CD4-positive, alpha-beta memory T cell (primary cell): ENCODE measurements at regions of chr1 and their contacts with region 1.

Region 1: GRCh38 chr1:231211005-231211857 is 29.8 kb upstream of the GNPAT start:
- DNase-seq: peak; percentile 79 to 87 (median 82)
- H3K4me3 ChIP-seq: peak overlapping the region in 1 of 2 donors; percentile 27
- H3K4me3 Mint-ChIP-seq: peak overlapping the region; percentile 87 to 95 (median 92)
- H3K27ac ChIP-seq: no peak overlapping the region
- H3K27ac Mint-ChIP-seq: peak overlapping the region in 5 of 7 donors; percentile 41 to 90 (median 84)
- H3K4me1 ChIP-seq: peaks cover 10% of the 10 kb centered on the region
- H3K4me1 Mint-ChIP-seq: peaks cover 4 to 10% (median 7%) of the 10 kb centered on the region in 4 donors
- H3K27me3 ChIP-seq: no peaks in the 10 kb centered on the region
- H3K27me3 Mint-ChIP-seq: peaks cover 0 to 3% of the 10 kb centered on the region in 2 donors

Region 2: GRCh38 chr1:230679192-230679591 is 532.0 kb before region 1 on chr1:
- CTCF ChIA-PET with region 1: no interaction called
- POLR2A ChIA-PET with region 1: no interaction called
- intact Hi-C with region 1: loop called (anchors 10 kb)
- DNase-seq: no peak
- H3K4me3 ChIP-seq: no peak overlapping the region
- H3K4me3 Mint-ChIP-seq: no peak overlapping the region
- H3K27ac ChIP-seq: no peak overlapping the region
- H3K27ac Mint-ChIP-seq: no peak overlapping the region
- H3K4me1 ChIP-seq: no peaks in the 10 kb centered on the region
- H3K4me1 Mint-ChIP-seq: peaks cover 0 to 4% (median under 1%) of the 10 kb centered on the region in 4 donors
- H3K27me3 ChIP-seq: no peaks in the 10 kb centered on the region
- H3K27me3 Mint-ChIP-seq: no peaks in the 10 kb centered on the region

Region 3: DNA sequence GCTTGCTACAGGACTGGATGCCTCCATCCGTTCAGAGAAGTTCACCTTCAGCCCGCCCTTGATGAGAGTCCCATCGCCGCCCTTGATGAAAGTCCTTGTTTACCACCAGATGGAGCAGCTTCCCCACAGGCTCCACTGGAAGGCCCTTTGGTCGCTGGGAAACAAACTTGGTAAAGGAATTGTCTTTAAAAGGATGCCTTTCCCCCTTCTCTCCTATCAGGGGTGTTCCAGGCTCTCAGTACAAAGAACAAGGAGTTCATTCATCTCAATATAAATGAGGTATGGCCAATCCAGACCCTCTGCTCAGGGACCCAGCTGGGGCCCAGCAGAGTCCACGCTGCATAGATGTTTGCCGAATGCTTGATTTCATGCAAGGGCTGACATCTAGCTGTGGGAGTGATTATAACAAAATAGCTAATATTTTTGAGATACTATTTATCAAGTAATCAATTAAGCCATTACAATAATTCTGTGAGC is 413.3 kb before region 1 on chr1:
- CTCF ChIA-PET with region 1: interaction called, 6 read pairs
- POLR2A ChIA-PET with region 1: no interaction called
- intact Hi-C with region 1: loop called (anchors 2 kb)
- DNase-seq: no peak
- H3K4me3 ChIP-seq: no peak overlapping the region
- H3K4me3 Mint-ChIP-seq: no peak overlapping the region
- H3K27ac ChIP-seq: no peak overlapping the region
- H3K27ac Mint-ChIP-seq: no peak overlapping the region
- H3K4me1 ChIP-seq: no peaks in the 10 kb centered on the region
- H3K4me1 Mint-ChIP-seq: no peaks in the 10 kb centered on the region
- H3K27me3 ChIP-seq: no peaks in the 10 kb centered on the region
- H3K27me3 Mint-ChIP-seq: peaks cover 11 to 18% of the 10 kb centered on the region in 2 donors

Region 4: DNA sequence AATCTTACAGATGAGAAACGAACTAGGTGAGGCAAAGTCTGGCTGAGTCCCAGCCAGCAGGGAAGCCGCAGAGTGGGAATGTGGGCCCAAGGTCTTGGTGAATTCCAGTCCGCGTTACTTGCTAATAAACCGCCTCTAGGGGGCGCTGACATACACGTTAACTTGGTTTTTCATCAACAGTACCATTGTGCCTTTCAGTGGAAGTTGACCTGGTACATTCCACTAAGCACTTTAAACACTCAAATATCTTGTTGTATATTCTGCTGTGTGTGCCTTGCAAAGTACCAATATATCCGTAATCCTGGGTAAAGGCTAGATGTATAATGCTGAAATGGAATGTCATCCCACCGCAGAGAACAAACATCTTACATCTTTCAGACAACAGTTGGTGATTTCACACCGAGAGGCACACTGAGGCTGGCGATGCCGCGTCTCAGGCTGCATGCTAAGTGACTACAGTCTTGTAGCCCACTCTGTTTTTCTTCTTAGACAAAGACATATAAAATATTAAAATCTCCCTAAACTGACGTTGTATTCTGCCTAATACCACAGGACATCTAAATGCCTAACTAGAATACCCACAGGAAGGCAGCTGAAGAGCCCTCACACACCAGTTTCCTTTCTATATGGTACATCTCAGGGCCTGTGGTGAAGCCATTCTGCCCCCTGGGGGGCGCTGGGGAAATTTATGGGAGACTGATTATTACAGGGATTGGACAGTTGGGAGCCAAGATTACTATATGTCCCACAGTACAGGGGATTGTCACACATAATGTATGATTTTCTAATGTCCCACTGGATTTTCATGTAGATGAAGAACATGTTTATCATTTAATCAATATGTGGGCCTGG is 293.7 kb before region 1 on chr1:
- CTCF ChIA-PET with region 1: interaction called, 24 read pairs
- POLR2A ChIA-PET with region 1: no interaction called
- intact Hi-C with region 1: loop called (anchors 1 kb)
- DNase-seq: peak; percentile 67 to 74 (median 69)
- H3K4me3 ChIP-seq: no peak overlapping the region
- H3K4me3 Mint-ChIP-seq: no peak overlapping the region
- H3K27ac ChIP-seq: no peak overlapping the region
- H3K27ac Mint-ChIP-seq: peak overlapping the region in 2 of 7 donors; percentile 43 to 61
- H3K4me1 ChIP-seq: no peaks in the 10 kb centered on the region
- H3K4me1 Mint-ChIP-seq: peaks cover 0 to 2% (median 0%) of the 10 kb centered on the region in 4 donors
- H3K27me3 ChIP-seq: no peaks in the 10 kb centered on the region
- H3K27me3 Mint-ChIP-seq: no peaks in the 10 kb centered on the region

Region 5: GRCh38 chr1:230922620-230923019 is 288.6 kb before region 1 on chr1:
- CTCF ChIA-PET with region 1: interaction called, 24 read pairs
- POLR2A ChIA-PET with region 1: no interaction called
- intact Hi-C with region 1: loop called (anchors 1 kb)
- DNase-seq: no peak
- H3K4me3 ChIP-seq: no peak overlapping the region
- H3K4me3 Mint-ChIP-seq: no peak overlapping the region
- H3K27ac ChIP-seq: no peak overlapping the region
- H3K27ac Mint-ChIP-seq: peak overlapping the region in 2 of 7 donors; percentile 9 to 74
- H3K4me1 ChIP-seq: no peaks in the 10 kb centered on the region
- H3K4me1 Mint-ChIP-seq: no peaks in the 10 kb centered on the region
- H3K27me3 ChIP-seq: no peaks in the 10 kb centered on the region
- H3K27me3 Mint-ChIP-seq: no peaks in the 10 kb centered on the region